ENCODE measurements at regions of chr15 and their contacts with region 1.

Region 1: GRCh38 chr15:31200735-31201151 is 99.2 kb upstream of the TRPM1 start:
- DNase-seq: peak; percentile 52 to 83 (median 71)
- ATAC-seq: peak; percentile 76
- H3K4me3 ChIP-seq: no peak overlapping the region
- H3K4me3 Mint-ChIP-seq: no peak overlapping the region
- H3K27ac ChIP-seq: no peak overlapping the region
- H3K27ac Mint-ChIP-seq: no peak overlapping the region
- H3K4me1 ChIP-seq: peaks cover 20% of the 10 kb centered on the region
- H3K4me1 Mint-ChIP-seq: peaks cover 20% of the 10 kb centered on the region
- H3K27me3 ChIP-seq: no peaks in the 10 kb centered on the region
- H3K27me3 Mint-ChIP-seq: no peaks in the 10 kb centered on the region
- CTCF ChIP-seq: peak; percentile 51

Region 2: GRCh38 chr15:31080591-31081014 is 120.1 kb before region 1 on chr15:
- CTCF ChIA-PET with region 1: no interaction called
- POLR2A ChIA-PET with region 1: no interaction called
- intact Hi-C with region 1: no loop called
- DNase-seq: peak in 7 of 9 experiments; percentile 3 to 49 (median 33)
- ATAC-seq: peak; percentile 68
- H3K4me3 ChIP-seq: peak overlapping the region in 1 of 2 experiments; percentile 18
- H3K4me3 Mint-ChIP-seq: peak overlapping the region; percentile 64
- H3K27ac ChIP-seq: no peak overlapping the region
- H3K27ac Mint-ChIP-seq: no peak overlapping the region
- H3K4me1 ChIP-seq: no peaks in the 10 kb centered on the region
- H3K4me1 Mint-ChIP-seq: peaks cover 6% of the 10 kb centered on the region
- H3K27me3 ChIP-seq: no peaks in the 10 kb centered on the region
- H3K27me3 Mint-ChIP-seq: peaks cover 16% of the 10 kb centered on the region
- CTCF ChIP-seq: no peak

Region 3: GRCh38 chr15:31440754-31441311 is 240.1 kb after region 1 on chr15:
- CTCF ChIA-PET with region 1: interaction called, 21 read pairs
- POLR2A ChIA-PET with region 1: no interaction called
- intact Hi-C with region 1: no loop called
- DNase-seq: peak in 6 of 9 experiments; percentile 41 to 72 (median 46)
- ATAC-seq: peak; percentile 36
- H3K4me3 ChIP-seq: peak overlapping the region; percentile 47 to 57
- H3K4me3 Mint-ChIP-seq: peak overlapping the region; percentile 64
- H3K27ac ChIP-seq: peak overlapping the region; percentile 45 to 53
- H3K27ac Mint-ChIP-seq: peak overlapping the region; percentile 79
- H3K4me1 ChIP-seq: peaks cover 56% of the 10 kb centered on the region
- H3K4me1 Mint-ChIP-seq: peaks cover 60% of the 10 kb centered on the region
- H3K27me3 ChIP-seq: no peaks in the 10 kb centered on the region
- H3K27me3 Mint-ChIP-seq: no peaks in the 10 kb centered on the region
- CTCF ChIP-seq: no peak

Region 4: DNA sequence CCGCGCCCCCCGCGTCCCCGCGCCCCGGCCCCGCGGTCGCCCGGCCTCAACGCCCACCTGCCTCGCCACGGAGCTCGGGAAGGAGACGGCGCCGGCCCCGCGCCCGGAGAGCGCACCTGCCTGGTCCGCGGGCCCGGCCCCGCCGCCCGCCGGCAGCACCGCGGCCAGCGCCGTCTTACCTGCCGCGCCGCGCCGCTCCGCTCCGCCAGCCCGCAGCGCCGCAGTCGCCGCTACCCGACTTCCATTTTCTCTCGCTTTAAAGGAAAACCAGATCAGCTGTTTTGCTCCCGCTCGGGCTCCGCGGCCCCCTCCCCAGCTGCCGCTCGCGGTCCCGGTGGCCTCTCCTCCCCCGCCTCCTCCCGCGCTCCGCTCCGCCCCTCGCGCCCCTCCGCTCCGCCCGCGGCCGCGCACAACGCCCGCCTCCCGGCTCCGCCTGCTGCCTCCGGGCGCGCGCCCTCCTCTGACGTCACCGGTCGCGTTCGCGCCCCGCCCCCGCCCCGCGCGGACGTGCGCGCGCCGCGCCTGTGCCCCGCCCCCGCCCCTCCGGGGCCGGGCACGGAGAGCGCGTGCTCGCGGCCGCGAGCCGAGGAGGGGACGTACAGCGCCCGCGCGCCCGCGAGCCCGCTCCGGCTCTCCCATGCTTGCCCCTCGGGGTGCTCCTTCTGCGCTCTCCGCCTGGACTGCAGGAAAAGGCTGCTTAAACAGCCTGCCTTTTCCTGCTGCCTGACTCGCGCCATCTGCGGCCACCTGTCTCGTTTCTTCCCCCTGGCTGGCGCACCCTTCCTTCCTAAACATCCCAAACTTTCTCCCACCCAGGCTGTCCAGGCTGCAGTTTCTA is 669.8 kb after region 1 on chr15:
- CTCF ChIA-PET with region 1: no interaction called
- POLR2A ChIA-PET with region 1: no interaction called
- intact Hi-C with region 1: loop called in 1 of 2 experiments (anchors 2 kb)
- DNase-seq: peak; percentile 66 to 93 (median 85)
- ATAC-seq: peak; percentile 87
- H3K4me3 ChIP-seq: peak within 1 kb of the TSS; percentile 71 to 83
- H3K4me3 Mint-ChIP-seq: peak within 1 kb of the TSS; percentile 87
- H3K27ac ChIP-seq: peak within 1 kb of the TSS; percentile 52 to 64
- H3K27ac Mint-ChIP-seq: peak within 1 kb of the TSS; percentile 85
- H3K4me1 ChIP-seq: peaks cover 10% of the 10 kb centered on the region
- H3K4me1 Mint-ChIP-seq: peaks cover 13% of the 10 kb centered on the region
- H3K27me3 ChIP-seq: no peaks in the 10 kb centered on the region
- H3K27me3 Mint-ChIP-seq: peaks cover 10% of the 10 kb centered on the region
- CTCF ChIP-seq: no peak

Measured in CD8-positive, alpha-beta T cell (primary cell).